HEK293 (cell line): ENCODE measurements at regions of chrX and their contacts with region 1.

Region 1: GRCh38 chrX:49269010-49269767 is 404 bp upstream of the PPP1R3F start:
- H3K4me3 ChIP-seq: peak overlapping the region; percentile 73
- H3K27ac ChIP-seq: peak overlapping the region; percentile 87
- H3K4me1 ChIP-seq: no peaks in the 10 kb centered on the region; the same call in 1 of the 2 replicates
- CTCF ChIP-seq: no peak

Region 2: DNA sequence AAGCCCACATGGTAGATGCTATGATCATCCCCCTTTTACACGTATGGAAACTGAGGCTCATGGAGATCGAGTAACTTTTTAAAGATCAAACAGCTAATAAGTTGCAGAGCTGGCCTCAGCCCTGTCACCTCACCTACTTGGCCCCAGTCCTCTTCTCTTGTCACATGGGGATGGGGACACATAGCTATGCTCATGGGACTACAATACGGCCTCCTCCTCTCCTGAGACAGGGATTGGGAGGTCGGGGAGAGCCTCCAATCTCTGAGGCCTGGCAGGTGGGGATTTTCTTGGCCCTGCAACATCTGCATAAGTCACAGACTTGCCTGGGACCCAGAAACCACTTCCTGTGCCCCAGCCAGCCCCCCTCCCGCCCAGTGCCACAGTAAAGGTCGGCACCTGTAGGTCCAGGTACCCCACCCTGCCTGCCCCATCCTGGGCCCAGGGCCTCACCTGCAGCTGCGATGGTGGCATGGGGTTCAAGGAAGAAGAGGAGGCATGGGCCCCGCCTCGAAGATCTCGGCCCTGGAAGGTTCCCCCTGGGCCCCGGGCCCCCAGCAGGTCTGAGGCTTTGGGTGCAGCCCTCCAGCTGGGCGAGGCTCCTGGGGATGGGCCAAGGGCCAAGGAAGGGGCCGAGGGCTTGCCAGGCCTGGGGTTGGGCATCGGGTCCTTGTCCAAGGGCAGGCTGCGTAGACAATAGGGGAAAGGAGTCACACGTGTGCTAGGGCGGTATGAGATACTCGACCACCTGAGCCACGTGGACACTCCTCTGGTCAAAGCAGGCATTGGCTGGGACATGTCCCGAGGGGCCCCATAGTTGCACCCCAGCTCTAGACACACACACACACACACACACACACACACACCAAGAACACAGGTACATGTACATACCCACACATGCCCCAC is 11.1 kb before region 1 on chrX:
- CTCF ChIA-PET with region 1: no interaction called
- POLR2A ChIA-PET with region 1: interaction called, 11 read pairs
- H3K4me3 ChIP-seq: no peak overlapping the region
- H3K27ac ChIP-seq: no peak overlapping the region
- H3K4me1 ChIP-seq: no peaks in the 10 kb centered on the region
- CTCF ChIP-seq: no peak